B cell (primary cell): ENCODE measurements at regions of chr11 and their contacts with region 1.

Region 1: GRCh38 chr11:96464700-96465307 is 75.0 kb downstream of the JRKL start:
- DNase-seq: peak; percentile 63
- ATAC-seq: peak; percentile 67
- H3K4me3 ChIP-seq: peak overlapping the region in 1 of 5 experiments; percentile 24
- H3K4me3 Mint-ChIP-seq: no peak overlapping the region
- H3K27ac ChIP-seq: no peak overlapping the region
- H3K27ac Mint-ChIP-seq: no peak overlapping the region
- H3K4me1 ChIP-seq: peaks cover 3 to 4% of the 10 kb centered on the region in 2 donors
- H3K4me1 Mint-ChIP-seq: peaks cover 2% of the 10 kb centered on the region
- H3K27me3 ChIP-seq: peaks cover 0 to 3% (median 0%) of the 10 kb centered on the region in 4 experiments
- H3K27me3 Mint-ChIP-seq: peaks cover 12% of the 10 kb centered on the region
- CTCF ChIP-seq: peak; percentile 87

Region 2: DNA sequence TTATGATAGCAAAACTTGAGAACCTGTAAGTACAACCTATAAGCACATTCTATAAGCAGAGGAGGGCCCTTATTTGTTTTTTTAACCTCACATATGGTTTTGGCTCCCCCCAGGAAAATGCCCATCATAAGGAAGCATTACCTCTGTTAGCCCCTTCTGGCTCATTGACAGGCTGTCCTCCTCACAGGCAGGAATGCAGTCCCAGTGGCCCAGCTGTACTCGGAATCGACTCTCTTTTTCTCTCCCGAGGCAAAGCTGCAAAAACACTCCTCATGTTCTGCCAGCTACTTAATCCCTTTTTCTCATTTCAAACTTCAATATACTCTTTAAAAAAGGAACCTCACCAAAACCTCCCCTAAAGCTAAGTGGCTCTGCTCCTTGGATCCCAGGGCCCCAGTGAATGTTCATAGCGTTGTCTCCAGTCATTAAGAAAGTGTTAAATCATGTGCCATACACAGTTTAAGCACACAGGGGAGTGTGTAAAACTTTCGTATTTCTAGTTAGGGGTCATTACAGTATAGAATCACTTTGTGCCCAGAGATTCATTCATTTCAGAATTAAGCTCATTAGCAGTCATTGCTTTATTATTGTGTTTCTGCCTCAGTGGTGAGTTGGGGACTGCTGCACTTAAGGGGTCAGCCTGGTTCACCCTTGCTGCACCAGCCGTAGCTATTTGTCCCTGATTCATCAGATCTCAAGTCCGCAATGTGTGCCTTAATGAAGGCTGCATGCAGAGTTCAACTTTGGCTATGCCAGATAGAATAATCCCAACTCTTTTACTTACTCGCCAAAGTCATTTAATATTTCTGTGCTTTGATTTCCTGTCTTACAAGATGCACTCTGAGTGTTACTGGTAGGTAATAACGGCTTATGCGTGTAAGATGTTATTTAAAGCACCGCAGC is 17.3 kb before region 1 on chr11:
- CTCF ChIA-PET with region 1: interaction called, 16 read pairs
- POLR2A ChIA-PET with region 1: no interaction called
- intact Hi-C with region 1: no loop called
- DNase-seq: no peak
- ATAC-seq: no peak
- H3K4me3 ChIP-seq: no peak overlapping the region
- H3K4me3 Mint-ChIP-seq: no peak overlapping the region
- H3K27ac ChIP-seq: no peak overlapping the region
- H3K27ac Mint-ChIP-seq: no peak overlapping the region
- H3K4me1 ChIP-seq: no peaks in the 10 kb centered on the region
- H3K4me1 Mint-ChIP-seq: no peaks in the 10 kb centered on the region
- H3K27me3 ChIP-seq: peaks cover 0 to 14% (median 4%) of the 10 kb centered on the region in 4 experiments
- H3K27me3 Mint-ChIP-seq: peaks cover 24% of the 10 kb centered on the region
- CTCF ChIP-seq: no peak

Region 3: DNA sequence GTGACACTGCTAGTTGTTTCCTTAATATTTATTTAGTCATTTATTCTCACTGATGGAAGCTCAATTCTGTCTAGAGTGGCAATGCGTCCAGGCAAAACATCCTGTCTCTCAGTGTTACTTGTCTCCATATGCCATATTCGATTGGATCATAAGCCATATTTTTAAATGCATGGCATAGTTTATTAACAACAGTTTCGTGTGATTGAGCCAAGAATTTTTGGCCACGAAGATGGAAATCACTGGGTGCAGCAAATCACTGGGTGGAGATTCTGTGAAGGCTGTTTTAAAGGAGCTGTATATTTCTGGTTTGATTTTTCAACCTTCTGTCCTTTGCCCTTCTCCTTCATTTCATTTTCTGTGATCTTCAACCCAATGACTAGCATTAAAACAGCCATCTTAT is 130.2 kb after region 1 on chr11:
- CTCF ChIA-PET with region 1: no interaction called
- POLR2A ChIA-PET with region 1: no interaction called
- intact Hi-C with region 1: no loop called
- DNase-seq: no peak
- ATAC-seq: no peak
- H3K4me3 ChIP-seq: no peak overlapping the region
- H3K4me3 Mint-ChIP-seq: no peak overlapping the region
- H3K27ac ChIP-seq: no peak overlapping the region
- H3K27ac Mint-ChIP-seq: no peak overlapping the region
- H3K4me1 ChIP-seq: no peaks in the 10 kb centered on the region
- H3K4me1 Mint-ChIP-seq: no peaks in the 10 kb centered on the region
- H3K27me3 ChIP-seq: no peaks in the 10 kb centered on the region
- H3K27me3 Mint-ChIP-seq: no peaks in the 10 kb centered on the region
- CTCF ChIP-seq: no peak